Endothelial cell of umbilical vein (primary cell): ENCODE measurements at regions of chr7 and their contacts with region 1.

Region 1: GRCh38 chr7:34675749-34676374 is 17.8 kb downstream of the NPSR1 start:
- DNase-seq: peak; percentile 51
- H3K4me3 ChIP-seq: no peak overlapping the region
- H3K27ac ChIP-seq: no peak overlapping the region
- H3K4me1 ChIP-seq: no peaks in the 10 kb centered on the region
- H3K27me3 ChIP-seq: no peaks in the 10 kb centered on the region
- CTCF ChIP-seq: peak; percentile 63
- POLR2A ChIP-seq: no peak

Region 2: DNA sequence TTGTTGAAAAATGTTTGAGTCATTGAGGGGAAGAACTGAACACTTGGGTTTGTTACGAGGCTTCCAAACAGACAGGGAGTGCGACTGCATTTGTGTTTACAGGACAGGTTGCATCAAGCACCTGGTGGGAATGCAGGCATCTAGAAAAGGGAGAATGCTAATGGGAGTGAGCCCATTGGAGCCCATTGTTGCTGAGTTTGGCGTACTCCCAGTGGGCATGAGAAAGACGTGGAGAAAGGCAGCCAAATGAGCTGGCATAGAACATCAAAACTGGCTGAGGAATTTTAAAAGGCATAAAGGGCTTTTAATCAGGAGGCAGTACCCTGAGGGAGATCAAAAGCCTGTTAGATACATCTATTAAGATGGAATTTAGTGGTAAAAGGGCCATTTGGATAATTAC is 189.5 kb before region 1 on chr7:
- CTCF ChIA-PET with region 1: no interaction called
- POLR2A ChIA-PET with region 1: no interaction called
- dilution Hi-C with region 1: no loop called
- intact Hi-C with region 1: no loop called
- DNase-seq: no peak
- H3K4me3 ChIP-seq: no peak overlapping the region
- H3K27ac ChIP-seq: no peak overlapping the region
- H3K4me1 ChIP-seq: no peaks in the 10 kb centered on the region
- H3K27me3 ChIP-seq: no peaks in the 10 kb centered on the region
- CTCF ChIP-seq: no peak
- POLR2A ChIP-seq: no peak

Region 3: GRCh38 chr7:34928049-34928448 is 252.2 kb after region 1 on chr7:
- CTCF ChIA-PET with region 1: no interaction called
- POLR2A ChIA-PET with region 1: no interaction called
- dilution Hi-C with region 1: no loop called
- intact Hi-C with region 1: loop called (anchors 5 kb)
- DNase-seq: no peak
- H3K4me3 ChIP-seq: no peak overlapping the region
- H3K27ac ChIP-seq: no peak overlapping the region
- H3K4me1 ChIP-seq: no peaks in the 10 kb centered on the region
- H3K27me3 ChIP-seq: no peaks in the 10 kb centered on the region
- CTCF ChIP-seq: peak; percentile 32 to 44
- POLR2A ChIP-seq: no peak

Region 4: GRCh38 chr7:35537067-35538023 is 861.5 kb after region 1 on chr7:
- CTCF ChIA-PET with region 1: no interaction called
- POLR2A ChIA-PET with region 1: no interaction called
- dilution Hi-C with region 1: no loop called
- intact Hi-C with region 1: loop called (anchors 10 kb)
- DNase-seq: peak; percentile 70
- H3K4me3 ChIP-seq: peak overlapping the region in 1 of 3 experiments; percentile 28
- H3K27ac ChIP-seq: no peak overlapping the region
- H3K4me1 ChIP-seq: no peaks in the 10 kb centered on the region
- H3K27me3 ChIP-seq: peaks cover 0 to 5% of the 10 kb centered on the region in 2 experiments
- CTCF ChIP-seq: peak; percentile 92 to 99
- POLR2A ChIP-seq: no peak